Activated CD4-positive, alpha-beta memory T cell treated with anti-CD3 and anti-CD28 coated beads for 36 hours (primary cell): ENCODE measurements at regions of chr5 and their contacts with region 1.

Region 1: DNA sequence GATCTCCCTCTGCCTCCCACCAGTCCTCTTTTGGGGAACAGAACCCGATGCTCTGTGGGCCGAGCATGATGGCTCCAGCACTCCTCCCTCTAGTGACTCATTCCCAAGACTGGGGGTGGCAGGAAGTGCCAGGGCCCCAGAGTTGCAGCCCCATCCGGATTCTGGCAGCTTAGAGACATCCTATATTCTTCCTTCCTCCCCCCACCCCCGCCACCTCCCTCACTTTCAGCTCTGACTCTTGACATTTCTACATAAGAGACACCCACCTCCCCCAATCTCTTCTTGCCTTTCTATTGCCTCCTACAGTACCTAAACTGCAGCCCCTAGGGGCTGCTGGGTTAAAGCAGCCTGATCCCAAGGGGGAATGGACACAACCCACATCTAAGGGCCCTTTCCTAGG is 47.1 kb upstream of the MATR3 start:
- DNase-seq: peak; percentile 85
- H3K4me3 Mint-ChIP-seq: peak overlapping the region; percentile 43
- H3K27ac Mint-ChIP-seq: peak overlapping the region; percentile 88
- H3K4me1 Mint-ChIP-seq: peaks cover 26% of the 10 kb centered on the region
- H3K27me3 Mint-ChIP-seq: peaks cover 2% of the 10 kb centered on the region

Region 2: GRCh38 chr5:138737494-138738265 is 508.7 kb before region 1 on chr5:
- CTCF ChIA-PET with region 1: no interaction called
- POLR2A ChIA-PET with region 1: no interaction called
- intact Hi-C with region 1: loop called (anchors 1 kb)
- DNase-seq: no peak
- H3K4me3 Mint-ChIP-seq: no peak overlapping the region
- H3K27ac Mint-ChIP-seq: no peak overlapping the region
- H3K4me1 Mint-ChIP-seq: peaks cover 21% of the 10 kb centered on the region
- H3K27me3 Mint-ChIP-seq: peaks cover 2% of the 10 kb centered on the region

Region 3: GRCh38 chr5:138805096-138805495 is 441.3 kb before region 1 on chr5:
- CTCF ChIA-PET with region 1: no interaction called
- POLR2A ChIA-PET with region 1: no interaction called
- intact Hi-C with region 1: no loop called
- DNase-seq: no peak
- H3K4me3 Mint-ChIP-seq: no peak overlapping the region
- H3K27ac Mint-ChIP-seq: no peak overlapping the region
- H3K4me1 Mint-ChIP-seq: peaks cover 8% of the 10 kb centered on the region
- H3K27me3 Mint-ChIP-seq: peaks cover 2% of the 10 kb centered on the region

Region 4: GRCh38 chr5:139262742-139263445 is 16.5 kb after region 1 on chr5:
- CTCF ChIA-PET with region 1: interaction called, 16 read pairs
- POLR2A ChIA-PET with region 1: no interaction called
- intact Hi-C with region 1: no loop called
- DNase-seq: peak; percentile 82
- H3K4me3 Mint-ChIP-seq: no peak overlapping the region
- H3K27ac Mint-ChIP-seq: no peak overlapping the region
- H3K4me1 Mint-ChIP-seq: no peaks in the 10 kb centered on the region
- H3K27me3 Mint-ChIP-seq: peaks cover 1% of the 10 kb centered on the region

Region 5: DNA sequence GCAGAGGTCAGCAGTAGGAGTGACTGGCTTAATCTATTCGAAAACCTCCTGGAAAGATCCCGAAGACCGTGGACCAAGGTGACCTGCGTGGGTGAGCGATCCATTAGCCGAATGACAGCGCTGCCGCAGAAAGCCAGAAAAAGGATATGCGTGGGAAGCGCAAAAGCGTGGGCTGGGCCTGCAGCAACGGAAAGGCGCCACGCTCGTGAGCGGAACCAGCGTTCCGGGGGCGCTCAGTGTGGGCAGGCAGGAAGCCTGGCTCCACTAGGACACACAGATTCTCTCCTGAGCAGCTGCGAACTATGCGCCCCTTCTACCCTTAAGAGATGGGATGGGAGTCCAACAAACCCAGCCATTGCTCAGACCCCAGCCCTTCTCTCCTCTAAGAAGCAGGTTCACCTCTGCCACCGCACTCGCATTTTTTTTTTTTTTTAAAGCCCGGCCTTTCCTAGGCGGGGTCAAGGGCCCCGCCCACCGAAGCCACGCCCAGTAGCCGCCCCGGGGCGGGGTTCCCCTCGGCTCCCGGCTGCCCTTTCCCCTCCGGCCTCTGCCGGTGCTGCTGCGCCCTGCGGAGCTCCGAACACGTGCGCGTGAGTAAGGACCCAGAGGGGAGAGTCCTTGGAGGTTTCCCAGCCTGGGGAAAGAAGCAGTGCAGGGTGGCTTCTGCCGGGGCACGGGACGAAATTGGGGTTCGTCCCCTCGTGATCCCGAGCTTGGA is 27.3 kb after region 1 on chr5:
- CTCF ChIA-PET with region 1: interaction called, 12 read pairs
- POLR2A ChIA-PET with region 1: no interaction called
- intact Hi-C with region 1: loop called (anchors 2 kb)
- DNase-seq: peak; percentile 93
- H3K4me3 Mint-ChIP-seq: peak overlapping the region; percentile 96
- H3K27ac Mint-ChIP-seq: peak overlapping the region; percentile 89
- H3K4me1 Mint-ChIP-seq: peaks cover 60% of the 10 kb centered on the region
- H3K27me3 Mint-ChIP-seq: peaks cover 2% of the 10 kb centered on the region

Region 6: DNA sequence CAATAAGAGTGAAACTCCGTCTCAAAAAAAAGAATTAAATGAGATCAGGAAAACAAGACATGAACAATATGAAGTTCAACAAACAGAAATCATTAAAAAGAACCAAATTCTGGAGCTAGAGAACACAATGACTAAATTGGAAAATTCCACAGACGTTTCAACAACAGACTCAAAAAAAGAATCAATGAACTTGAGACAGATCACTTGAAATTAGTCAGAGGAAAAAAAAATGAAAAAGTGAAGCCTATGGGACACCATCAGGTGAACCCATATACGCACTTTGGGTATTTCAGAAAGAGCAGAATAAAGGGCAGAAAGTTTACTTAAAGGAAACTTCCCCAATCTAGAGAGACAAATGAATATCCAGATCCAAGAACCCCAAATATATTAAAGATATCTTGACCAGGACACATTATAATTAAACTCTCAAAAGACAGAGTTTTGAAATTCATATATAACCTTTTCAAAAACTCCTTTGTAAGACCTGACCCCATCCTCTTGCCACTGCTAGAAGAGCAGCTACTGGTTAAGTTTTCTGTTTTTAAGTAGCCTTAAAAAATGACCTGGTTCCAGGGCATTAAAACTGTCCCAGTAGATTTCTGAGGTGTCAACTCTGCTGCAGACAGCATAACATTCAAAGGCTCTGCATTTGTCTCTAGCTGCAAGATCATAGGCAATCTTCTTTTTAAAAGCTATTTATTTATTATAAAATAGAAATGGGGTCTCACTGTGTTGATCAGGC is 39.4 kb after region 1 on chr5:
- CTCF ChIA-PET with region 1: no interaction called
- POLR2A ChIA-PET with region 1: no interaction called
- intact Hi-C with region 1: no loop called
- DNase-seq: no peak
- H3K4me3 Mint-ChIP-seq: no peak overlapping the region
- H3K27ac Mint-ChIP-seq: no peak overlapping the region
- H3K4me1 Mint-ChIP-seq: peaks cover 15% of the 10 kb centered on the region
- H3K27me3 Mint-ChIP-seq: no peaks in the 10 kb centered on the region

Region 7: DNA sequence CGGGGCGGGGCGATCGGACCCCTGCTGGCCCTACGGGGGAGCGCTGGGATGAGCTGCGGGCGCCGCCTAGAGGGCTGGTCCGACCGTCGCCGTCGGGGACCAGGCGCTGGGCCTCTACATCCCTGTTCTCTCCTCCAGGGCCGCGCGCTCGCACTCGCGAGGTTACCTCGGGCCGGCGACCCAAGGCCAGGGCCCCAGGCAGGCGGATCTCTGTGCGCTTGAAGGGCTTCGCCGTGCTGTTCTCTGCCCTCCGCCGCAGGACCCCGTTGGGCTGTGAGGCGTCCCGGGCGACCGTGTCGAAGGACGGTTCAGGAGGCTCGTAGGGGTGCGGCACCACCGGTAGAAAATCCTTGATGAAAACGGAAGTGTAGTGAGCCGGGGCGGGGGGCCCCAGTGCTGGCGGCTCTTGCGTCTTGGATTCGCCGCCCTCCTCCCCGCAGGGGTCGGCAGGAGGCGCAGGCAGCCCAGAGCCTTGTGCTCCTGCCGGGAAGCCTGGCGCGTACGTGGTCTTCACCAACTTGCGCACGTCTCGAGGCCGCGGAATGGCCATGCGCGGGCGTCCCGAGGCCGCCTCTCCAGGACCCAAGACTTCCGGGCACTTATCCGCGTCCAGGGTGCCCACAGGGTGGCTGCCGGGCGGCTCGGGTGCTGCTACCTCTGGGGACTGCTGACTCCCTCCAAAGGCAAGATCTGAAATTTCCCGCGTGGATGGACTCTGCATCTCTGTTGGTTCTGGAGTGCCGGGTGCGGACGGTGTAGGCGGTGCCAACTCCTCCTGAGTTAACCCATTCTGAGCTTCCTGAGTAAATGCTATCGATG is 146.5 kb after region 1 on chr5:
- CTCF ChIA-PET with region 1: interaction called, 4 read pairs
- POLR2A ChIA-PET with region 1: no interaction called
- intact Hi-C with region 1: loop called (anchors 1 kb)
- DNase-seq: peak; percentile 93
- H3K4me3 Mint-ChIP-seq: peak overlapping the region; percentile 93
- H3K27ac Mint-ChIP-seq: peak overlapping the region; percentile 87
- H3K4me1 Mint-ChIP-seq: peaks cover 34% of the 10 kb centered on the region
- H3K27me3 Mint-ChIP-seq: no peaks in the 10 kb centered on the region